ENCODE measurements at regions of chr5 and their contacts with region 1.

Region 1: DNA sequence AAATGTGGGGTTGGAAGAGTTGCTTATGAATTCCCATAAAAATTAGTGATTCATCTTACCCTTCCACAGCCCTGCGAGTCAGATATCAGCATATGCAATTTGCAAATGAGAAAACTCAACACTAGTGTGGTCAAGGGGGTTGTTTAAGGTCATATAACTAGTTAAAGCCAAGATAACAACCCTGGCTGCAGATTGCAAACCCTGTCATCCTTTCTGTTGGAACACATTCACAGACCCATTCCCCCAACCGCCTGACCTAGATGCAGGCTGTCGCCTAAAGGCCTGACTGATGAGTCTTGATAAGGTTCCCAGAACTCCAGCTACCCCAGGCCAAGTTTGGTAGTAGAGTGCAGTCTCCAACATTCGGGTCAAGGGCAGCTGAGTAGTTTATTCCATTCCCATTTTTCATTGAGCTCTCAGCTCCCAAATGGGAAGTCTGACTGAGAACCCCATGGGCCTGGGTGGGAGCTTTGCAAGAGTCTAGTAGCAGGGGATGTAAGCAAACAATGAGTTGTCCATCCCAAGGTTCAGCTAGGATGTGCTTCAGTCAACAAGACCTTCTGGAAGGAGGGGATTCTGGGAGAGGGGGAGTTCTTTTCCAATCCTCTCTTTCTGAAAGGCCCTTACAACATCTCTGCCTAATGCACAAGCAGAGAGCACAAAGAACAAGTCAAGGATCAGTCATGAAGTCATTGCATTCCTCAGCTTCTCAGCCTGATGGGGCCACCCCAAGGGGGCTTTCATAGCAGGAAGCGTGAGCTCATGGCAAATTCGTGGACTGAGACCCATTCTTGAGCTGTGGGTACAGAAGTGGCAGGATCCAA is 40.3 kb downstream of the ADAM19 start:
- DNase-seq: no peak
- CTCF ChIP-seq: no peak

Region 2: DNA sequence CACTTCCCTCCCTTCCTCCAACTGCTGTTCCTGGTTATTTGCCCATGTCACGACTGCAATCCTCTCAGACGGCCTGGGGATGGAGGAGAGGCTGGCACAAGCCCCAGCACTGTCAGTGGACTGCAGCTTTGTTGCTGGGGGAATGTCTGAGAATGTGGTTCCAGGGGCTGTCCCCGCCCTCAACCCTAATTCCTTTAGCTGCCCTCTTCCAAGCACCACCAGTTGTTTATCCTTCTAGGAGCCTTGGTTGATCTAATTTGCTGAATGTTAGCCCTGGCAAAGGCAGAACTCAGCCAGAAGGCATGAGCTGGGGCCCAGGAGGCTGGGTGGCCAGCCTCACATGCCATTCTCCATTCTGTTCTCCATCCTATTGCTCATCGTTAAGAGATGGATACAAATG is 11.3 kb before region 1 on chr5:
- CTCF ChIA-PET with region 1: interaction called, 35 read pairs
- POLR2A ChIA-PET with region 1: no interaction called
- DNase-seq: no peak
- CTCF ChIP-seq: no peak

Measured in GM10248 (cell line).